PC-3 (cell line): ENCODE measurements at regions of chr3 and their contacts with region 1.

Region 1: DNA sequence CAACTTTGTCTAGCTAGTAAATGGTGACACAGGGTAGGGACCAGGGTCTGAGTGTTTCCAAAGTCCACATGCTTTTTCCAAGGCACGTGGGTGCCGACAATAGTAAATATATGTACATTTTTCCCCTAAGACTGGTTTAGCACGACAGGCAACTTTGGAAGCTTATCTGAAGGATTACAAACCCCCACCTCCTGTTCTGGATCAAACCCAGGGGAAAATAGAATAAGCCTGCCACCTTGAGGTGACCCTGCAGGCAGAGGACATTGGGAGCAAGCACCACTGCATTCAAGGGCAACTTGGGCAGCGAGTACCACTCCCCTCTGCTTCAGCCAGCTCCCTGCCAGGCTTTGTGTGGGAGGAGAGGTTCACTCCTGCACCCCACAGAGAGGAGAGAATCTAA is 44.8 kb downstream of the KBTBD12 start:
- DNase-seq: peak; percentile 62
- ATAC-seq: peak; percentile 32
- H3K4me3 ChIP-seq: no peak overlapping the region
- H3K27ac ChIP-seq: no peak overlapping the region
- H3K4me1 ChIP-seq: peaks cover 30% of the 10 kb centered on the region
- H3K27me3 ChIP-seq: no peaks in the 10 kb centered on the region
- CTCF ChIP-seq: peak; percentile 59

Region 2: GRCh38 chr3:127799476-127800222 is 160.2 kb before region 1 on chr3:
- CTCF ChIA-PET with region 1: no interaction called
- POLR2A ChIA-PET with region 1: no interaction called
- intact Hi-C with region 1: loop called (anchors 5 kb)
- DNase-seq: peak; percentile 89
- ATAC-seq: peak; percentile 79
- H3K4me3 ChIP-seq: peak overlapping the region; percentile 20; the same call in 1 of the 2 replicates
- H3K27ac ChIP-seq: peak overlapping the region; percentile 99
- H3K4me1 ChIP-seq: peaks cover 48% of the 10 kb centered on the region
- H3K27me3 ChIP-seq: no peaks in the 10 kb centered on the region
- CTCF ChIP-seq: no peak